Gastrocnemius medialis (tissue), 4 donors: ENCODE measurements at regions of chr1 and their contacts with region 1.

Region 1: GRCh38 chr1:28329395-28330153 is 734 bp downstream of the MED18 start:
- DNase-seq: peak in 1 of 2 donors; percentile 13
- ATAC-seq: no peak
- H3K4me3 ChIP-seq: peak overlapping the region; percentile 68 to 84 (median 82)
- H3K27ac ChIP-seq: peak overlapping the region; percentile 85 to 94 (median 89)
- H3K4me1 ChIP-seq: peaks cover 14 to 17% of the 10 kb centered on the region in 2 donors
- H3K27me3 ChIP-seq: no peaks in the 10 kb centered on the region
- CTCF ChIP-seq: no peak
- POLR2A ChIP-seq: no peak

Region 2: GRCh38 chr1:28369371-28370238 is 40.0 kb after region 1 on chr1 and contains the start of gene PHACTR4:
- in situ Hi-C with region 1: no loop called
- intact Hi-C with region 1: loop called (anchors 5 kb)
- DNase-seq: peak; percentile 87 to 93
- ATAC-seq: peak; percentile 95 to 97
- H3K4me3 ChIP-seq: peak within 1 kb of the TSS; percentile 75 to 92 (median 86)
- H3K27ac ChIP-seq: peak within 1 kb of the TSS; percentile 88 to 95 (median 93)
- H3K4me1 ChIP-seq: peaks cover 9 to 16% of the 10 kb centered on the region in 2 donors
- H3K27me3 ChIP-seq: no peaks in the 10 kb centered on the region
- CTCF ChIP-seq: no peak
- POLR2A ChIP-seq: peak; percentile 88 to 90
- total RNA-seq, gene PHACTR4: 9.1 to 17.7 (median 13.4) TPM